H1 (cell line): ENCODE measurements at regions of chr10 and their contacts with region 1.

Region 1: DNA sequence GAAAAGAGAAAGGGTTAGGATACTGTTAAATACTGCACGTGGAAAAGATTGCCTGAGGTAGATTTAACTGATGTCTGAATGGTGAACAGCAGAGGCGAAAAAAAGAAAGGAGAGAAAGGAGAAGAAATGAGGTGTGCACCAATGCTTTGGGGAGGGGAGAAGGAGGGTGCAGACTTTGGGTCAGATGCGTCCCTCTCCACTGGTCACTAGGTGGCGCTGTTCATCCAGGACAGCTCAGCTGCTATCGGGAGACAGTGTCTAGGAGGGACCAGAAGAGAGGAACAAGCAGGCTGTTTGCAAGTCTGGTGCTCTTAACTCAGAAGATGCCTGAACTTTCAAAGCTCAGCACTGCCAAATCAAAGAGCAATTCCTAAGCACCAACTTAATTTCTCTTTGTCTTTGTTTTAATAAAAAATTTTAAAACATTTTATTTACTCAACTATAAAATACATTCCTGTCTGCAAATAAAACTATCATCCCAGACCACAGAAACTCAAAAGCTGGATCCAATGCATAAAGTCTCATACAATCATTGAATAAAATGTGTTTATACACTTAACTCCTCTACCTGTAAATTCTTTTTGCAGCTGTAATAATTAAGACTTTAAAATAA is 83.9 kb upstream of the PDLIM1 start:
- DNase-seq: peak; percentile 56 to 85
- H3K4me3 ChIP-seq: no peak overlapping the region
- H3K27ac ChIP-seq: no peak overlapping the region
- H3K4me1 ChIP-seq: peaks cover 0 to 5% (median 4%) of the 10 kb centered on the region in 4 experiments; a peak in 4 of 7 replicates
- H3K27me3 ChIP-seq: no peaks in the 10 kb centered on the region
- CTCF ChIP-seq: peak; percentile 91 to 100 (median 100)
- EP300 ChIP-seq: no peak
- POLR2A ChIP-seq: no peak
- RAD21 ChIP-seq: peak; percentile 96 to 99

Region 2: GRCh38 chr10:95350219-95350829 is 24.4 kb before region 1 on chr10:
- CTCF ChIA-PET with region 1: interaction called, 149 read pairs
- POLR2A ChIA-PET with region 1: no interaction called
- DNase-seq: no peak
- H3K4me3 ChIP-seq: no peak overlapping the region
- H3K27ac ChIP-seq: no peak overlapping the region
- H3K4me1 ChIP-seq: peaks cover 0 to 2% (median 0%) of the 10 kb centered on the region in 4 experiments; a peak in 1 of 7 replicates
- H3K27me3 ChIP-seq: no peaks in the 10 kb centered on the region
- CTCF ChIP-seq: no peak
- EP300 ChIP-seq: no peak
- POLR2A ChIP-seq: no peak
- RAD21 ChIP-seq: no peak

Region 3: GRCh38 chr10:95391581-95392216 is 17.0 kb after region 1 on chr10:
- CTCF ChIA-PET with region 1: interaction called, 162 read pairs
- POLR2A ChIA-PET with region 1: interaction called, 6 read pairs
- DNase-seq: no peak
- H3K4me3 ChIP-seq: no peak overlapping the region
- H3K27ac ChIP-seq: no peak overlapping the region
- H3K4me1 ChIP-seq: peaks cover 0 to 3% (median 0%) of the 10 kb centered on the region in 4 experiments; a peak in 3 of 7 replicates
- H3K27me3 ChIP-seq: no peaks in the 10 kb centered on the region
- CTCF ChIP-seq: peak in 2 of 3 experiments; percentile 23 to 24; a peak in 2 of 4 replicates
- EP300 ChIP-seq: no peak
- POLR2A ChIP-seq: no peak
- RAD21 ChIP-seq: peak in 1 of 2 experiments; percentile 17; a peak in 1 of 4 replicates

Region 4: DNA sequence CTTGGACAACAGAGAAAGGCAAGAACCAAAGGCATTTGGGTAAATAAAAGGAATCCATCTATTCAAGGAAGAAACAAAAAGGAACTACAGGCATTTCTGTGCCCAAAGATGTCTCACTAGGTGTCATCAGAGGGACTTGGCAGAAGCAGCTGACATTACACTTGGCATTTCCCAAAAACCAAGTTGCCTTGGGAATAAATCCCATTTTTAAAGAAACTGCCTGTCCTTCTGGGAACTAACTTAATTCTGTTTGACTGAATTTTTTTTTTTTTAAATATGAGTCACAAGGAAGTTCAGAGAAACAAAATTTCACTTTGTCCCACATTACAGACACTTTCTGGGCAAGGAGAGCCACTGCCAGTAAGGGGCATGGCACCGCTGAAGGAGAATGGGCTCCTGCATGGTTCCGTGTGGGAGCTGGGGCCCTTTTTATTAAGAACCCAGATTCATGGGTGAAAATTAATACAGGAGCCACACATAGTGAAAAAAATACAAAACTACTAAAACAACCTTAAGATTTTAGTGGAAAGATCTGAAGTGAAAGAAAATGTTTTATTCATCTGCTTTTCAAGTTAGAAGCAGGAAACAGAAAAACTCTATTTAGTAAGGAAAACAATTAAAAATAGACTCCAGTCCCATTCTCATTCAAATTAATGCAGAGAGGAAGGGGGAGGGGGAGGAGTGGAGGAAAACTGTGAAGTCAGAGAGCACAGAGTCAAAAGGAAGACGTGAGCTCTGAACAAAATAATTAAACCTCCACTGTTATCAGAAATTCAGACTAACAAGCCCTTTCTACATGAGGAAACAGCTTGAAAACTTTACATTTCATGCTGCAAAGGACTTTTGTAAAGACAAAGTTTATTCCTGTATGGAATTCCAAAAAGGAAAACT is 34.5 kb after region 1 on chr10:
- CTCF ChIA-PET with region 1: interaction called, 60 read pairs
- POLR2A ChIA-PET with region 1: interaction called, 3 read pairs
- DNase-seq: no peak
- H3K4me3 ChIP-seq: peak overlapping the region in 3 of 4 experiments; percentile 2 to 43 (median 15); a peak in 4 of 8 replicates
- H3K27ac ChIP-seq: peak overlapping the region; percentile 47; the same call in 1 of the 2 replicates
- H3K4me1 ChIP-seq: peaks cover 4 to 12% (median 8%) of the 10 kb centered on the region in 4 experiments
- H3K27me3 ChIP-seq: no peaks in the 10 kb centered on the region; a peak in 1 of 7 replicates
- CTCF ChIP-seq: no peak
- EP300 ChIP-seq: no peak
- POLR2A ChIP-seq: no peak
- RAD21 ChIP-seq: no peak

Region 5: GRCh38 chr10:95440756-95441546 is 66.2 kb after region 1 on chr10:
- CTCF ChIA-PET with region 1: interaction called, 20 read pairs
- POLR2A ChIA-PET with region 1: no interaction called
- DNase-seq: no peak
- H3K4me3 ChIP-seq: no peak overlapping the region
- H3K27ac ChIP-seq: no peak overlapping the region; the same call in 1 of the 2 replicates
- H3K4me1 ChIP-seq: peaks cover 0 to 5% (median 0%) of the 10 kb centered on the region in 4 experiments; a peak in 1 of 7 replicates
- H3K27me3 ChIP-seq: no peaks in the 10 kb centered on the region
- CTCF ChIP-seq: no peak
- EP300 ChIP-seq: no peak
- POLR2A ChIP-seq: no peak
- RAD21 ChIP-seq: no peak

Region 6: DNA sequence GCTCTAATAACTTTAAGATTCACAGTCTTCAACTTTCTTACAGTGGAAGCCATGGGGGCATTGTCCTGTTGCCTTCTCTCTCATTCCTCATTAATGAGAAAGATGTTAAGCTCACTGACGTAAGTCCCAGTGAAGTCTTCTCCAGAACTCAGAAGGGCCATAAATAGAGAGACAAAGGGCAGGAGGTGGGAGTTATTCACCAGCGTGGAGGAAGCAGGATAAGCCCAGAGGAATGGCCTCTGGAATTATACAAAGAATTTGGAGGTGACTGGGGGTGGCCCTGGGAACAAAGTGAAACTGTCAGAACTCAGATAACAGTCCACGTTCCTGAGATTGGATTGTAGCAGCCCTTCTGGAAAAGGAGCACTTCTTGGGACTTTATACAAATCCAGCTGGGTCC is 134.0 kb after region 1 on chr10:
- CTCF ChIA-PET with region 1: no interaction called
- POLR2A ChIA-PET with region 1: no interaction called
- DNase-seq: no peak
- H3K4me3 ChIP-seq: no peak overlapping the region
- H3K27ac ChIP-seq: no peak overlapping the region
- H3K4me1 ChIP-seq: peaks cover 0 to 10% (median 6%) of the 10 kb centered on the region in 4 experiments; a peak in 5 of 7 replicates
- H3K27me3 ChIP-seq: no peaks in the 10 kb centered on the region
- CTCF ChIP-seq: no peak
- EP300 ChIP-seq: no peak
- POLR2A ChIP-seq: no peak
- RAD21 ChIP-seq: no peak

Region 7: DNA sequence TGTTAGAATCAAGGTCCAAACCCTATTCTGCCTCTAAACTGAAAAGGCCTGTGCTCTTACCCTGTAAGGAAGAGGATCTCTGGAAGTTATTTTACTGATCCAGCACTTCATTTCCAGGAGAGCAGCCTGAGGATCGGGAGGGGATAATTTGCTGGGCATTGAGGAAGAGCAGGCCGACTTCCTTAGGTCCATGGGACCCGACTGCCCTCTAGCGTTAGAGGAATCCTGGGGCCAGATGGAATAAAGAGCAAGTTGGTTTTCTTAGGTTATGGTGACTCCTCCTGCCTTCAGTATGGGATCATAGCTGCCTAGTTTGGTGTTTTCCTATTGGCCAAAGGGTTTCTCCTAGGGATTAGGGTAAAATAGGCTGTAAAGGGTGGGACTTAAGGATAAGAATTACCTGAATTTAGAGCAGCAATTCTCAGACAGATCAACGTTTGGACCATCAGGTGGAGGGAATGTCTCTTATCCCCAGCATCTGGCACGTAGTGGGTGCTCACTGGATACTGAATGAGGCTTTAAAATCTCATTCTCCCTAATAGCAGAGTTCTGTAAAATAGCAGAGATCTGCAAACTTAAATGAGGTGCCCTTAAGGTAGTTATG is 226.5 kb after region 1 on chr10:
- CTCF ChIA-PET with region 1: interaction called, 115 read pairs
- POLR2A ChIA-PET with region 1: no interaction called
- DNase-seq: peak; percentile 84 to 88
- H3K4me3 ChIP-seq: no peak overlapping the region
- H3K27ac ChIP-seq: no peak overlapping the region
- H3K4me1 ChIP-seq: peaks cover 0 to 3% (median 0%) of the 10 kb centered on the region in 4 experiments; a peak in 1 of 7 replicates
- H3K27me3 ChIP-seq: no peaks in the 10 kb centered on the region
- CTCF ChIP-seq: peak; percentile 78 to 99 (median 98)
- EP300 ChIP-seq: no peak
- POLR2A ChIP-seq: no peak
- RAD21 ChIP-seq: peak; percentile 100